ENCODE measurements at regions of chr1 and their contacts with region 1.

Region 1: GRCh38 chr1:85494904-85495266 is 29.9 kb upstream of the DDAH1 start:
- DNase-seq: no peak
- ATAC-seq: peak in 1 of 2 donors; percentile 50
- H3K4me3 ChIP-seq: no peak overlapping the region
- H3K27ac ChIP-seq: no peak overlapping the region
- H3K4me1 ChIP-seq: peaks cover 12 to 14% of the 10 kb centered on the region in 2 donors
- H3K27me3 ChIP-seq: no peaks in the 10 kb centered on the region
- CTCF ChIP-seq: peak in 3 of 5 experiments; percentile 22 to 53 (median 34)
- POLR2A ChIP-seq: no peak

Region 2: DNA sequence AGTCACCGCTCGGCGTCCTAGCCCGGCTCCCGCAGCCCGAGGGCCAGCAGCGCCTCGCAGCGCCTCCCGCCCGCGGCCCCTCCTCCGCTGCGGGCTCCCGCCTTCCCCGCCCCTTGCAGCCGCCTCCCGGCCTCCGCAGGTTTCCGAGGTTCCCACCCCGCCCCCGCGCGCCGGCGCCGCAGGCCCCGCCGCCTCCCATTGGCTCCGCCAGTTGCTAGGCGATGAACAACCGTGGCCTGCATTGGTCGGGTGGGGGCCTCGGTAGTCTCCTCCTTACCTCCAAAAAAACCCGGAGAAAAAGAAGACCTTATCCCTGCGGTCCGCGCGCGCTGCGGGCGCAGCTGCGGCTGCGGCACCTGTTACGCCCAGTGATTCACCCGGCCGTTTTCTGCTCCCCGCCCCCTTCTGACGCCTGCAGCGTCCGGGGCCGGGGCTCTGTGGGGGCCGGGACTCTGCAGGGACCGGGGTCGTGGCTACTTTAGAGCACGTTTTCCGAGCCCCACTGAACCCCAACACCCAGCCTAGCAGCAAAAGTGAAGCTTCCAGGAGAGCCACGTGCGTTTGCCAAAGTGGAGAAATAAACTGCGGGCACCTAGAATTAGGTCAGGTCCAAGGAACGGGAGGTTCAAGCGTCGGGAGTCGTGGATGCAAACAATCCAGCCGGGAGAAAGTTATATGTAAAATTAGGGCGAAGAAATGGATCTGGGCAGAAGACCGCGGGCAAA is 804.3 kb before region 1 on chr1 and contains the start of gene SSX2IP:
- in situ Hi-C with region 1: no loop called
- intact Hi-C with region 1: no loop called
- DNase-seq: peak; percentile 97 to 99
- ATAC-seq: peak; percentile 97 to 98
- H3K4me3 ChIP-seq: peak within 1 kb of the TSS; percentile 87 to 96 (median 89)
- H3K27ac ChIP-seq: peak within 1 kb of the TSS; percentile 83 to 91 (median 86)
- H3K4me1 ChIP-seq: peaks cover 4 to 17% of the 10 kb centered on the region in 2 donors
- H3K27me3 ChIP-seq: no peaks in the 10 kb centered on the region
- CTCF ChIP-seq: no peak
- POLR2A ChIP-seq: peak; percentile 10 to 61
- total RNA-seq, gene SSX2IP: 3.5 to 7.0 (median 4.7) TPM

Region 3: GRCh38 chr1:85438353-85438752 is 56.5 kb before region 1 on chr1:
- in situ Hi-C with region 1: no loop called
- intact Hi-C with region 1: no loop called
- DNase-seq: no peak
- ATAC-seq: no peak
- H3K4me3 ChIP-seq: no peak overlapping the region
- H3K27ac ChIP-seq: no peak overlapping the region
- H3K4me1 ChIP-seq: peaks cover 10 to 12% of the 10 kb centered on the region in 2 donors
- H3K27me3 ChIP-seq: no peaks in the 10 kb centered on the region
- CTCF ChIP-seq: no peak
- POLR2A ChIP-seq: no peak

Region 4: GRCh38 chr1:85544689-85545215 is 49.9 kb after region 1 on chr1:
- in situ Hi-C with region 1: loop called in 1 of 4 experiments (anchors 5 kb)
- intact Hi-C with region 1: no loop called
- DNase-seq: no peak
- ATAC-seq: no peak
- H3K4me3 ChIP-seq: no peak overlapping the region
- H3K27ac ChIP-seq: peak overlapping the region in 1 of 4 donors; percentile 39
- H3K4me1 ChIP-seq: peaks cover 7 to 19% of the 10 kb centered on the region in 2 donors
- H3K27me3 ChIP-seq: no peaks in the 10 kb centered on the region
- CTCF ChIP-seq: no peak
- POLR2A ChIP-seq: no peak